ENCODE measurements at regions of chr1 and their contacts with region 1.

Region 1: DNA sequence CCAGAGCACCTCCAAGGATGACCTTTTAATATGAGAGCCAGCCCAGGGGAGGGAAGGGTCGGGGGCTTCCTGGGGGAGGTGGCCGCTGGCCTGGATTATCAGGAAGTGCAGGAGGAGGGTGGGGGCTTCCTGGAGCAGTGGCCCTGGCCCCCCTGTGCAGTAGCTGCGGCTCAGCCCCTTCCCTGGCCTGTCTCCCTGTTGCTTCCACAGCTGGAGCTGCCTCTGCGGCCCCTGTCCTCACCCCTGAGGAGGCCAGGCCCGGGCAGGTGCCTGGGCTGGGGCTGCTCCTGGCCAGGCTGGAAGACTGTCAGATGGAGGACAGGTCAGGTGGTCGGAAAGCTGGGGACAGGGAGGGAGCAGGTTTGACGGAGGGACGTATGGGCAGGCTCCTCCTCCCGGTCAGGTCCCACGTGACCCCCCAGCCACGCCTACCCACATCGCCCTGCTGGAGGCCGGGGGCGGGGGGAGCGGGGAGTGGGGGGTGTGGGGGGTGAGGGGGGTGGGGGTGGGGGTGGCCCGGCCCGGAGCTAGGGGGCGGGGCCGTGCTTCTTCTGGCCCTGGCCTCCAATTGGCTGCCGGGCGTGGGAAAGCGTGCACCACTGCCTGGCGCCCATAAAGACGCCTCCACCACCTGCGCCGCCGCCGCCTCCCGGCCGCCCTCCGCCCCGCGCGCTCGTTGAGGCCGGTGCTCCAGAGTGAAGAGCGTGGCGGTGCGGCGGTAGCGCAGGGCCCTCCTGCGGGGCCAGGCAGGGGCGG is 10.2 kb upstream of the TNFRSF14 start:
- DNase-seq: peak; percentile 57
- H3K4me3 ChIP-seq: peak overlapping the region in 2 of 3 experiments; percentile 43 to 44
- H3K27ac ChIP-seq: no peak overlapping the region
- H3K4me1 ChIP-seq: peaks cover 31% of the 10 kb centered on the region
- H3K27me3 ChIP-seq: no peaks in the 10 kb centered on the region
- CTCF ChIP-seq: no peak

Region 2: GRCh38 chr1:2429780-2430591 is 116.0 kb before region 1 on chr1:
- CTCF ChIA-PET with region 1: no interaction called
- dilution Hi-C with region 1: no loop called
- in situ Hi-C with region 1: loop called in 1 of 2 experiments (anchors 10 kb)
- intact Hi-C with region 1: no loop called
- DNase-seq: no peak
- H3K4me3 ChIP-seq: peak overlapping the region; percentile 70 to 83 (median 75)
- H3K27ac ChIP-seq: peak overlapping the region; percentile 74
- H3K4me1 ChIP-seq: peaks cover 54% of the 10 kb centered on the region
- H3K27me3 ChIP-seq: no peaks in the 10 kb centered on the region
- CTCF ChIP-seq: peak; percentile 63 to 79

Region 3: DNA sequence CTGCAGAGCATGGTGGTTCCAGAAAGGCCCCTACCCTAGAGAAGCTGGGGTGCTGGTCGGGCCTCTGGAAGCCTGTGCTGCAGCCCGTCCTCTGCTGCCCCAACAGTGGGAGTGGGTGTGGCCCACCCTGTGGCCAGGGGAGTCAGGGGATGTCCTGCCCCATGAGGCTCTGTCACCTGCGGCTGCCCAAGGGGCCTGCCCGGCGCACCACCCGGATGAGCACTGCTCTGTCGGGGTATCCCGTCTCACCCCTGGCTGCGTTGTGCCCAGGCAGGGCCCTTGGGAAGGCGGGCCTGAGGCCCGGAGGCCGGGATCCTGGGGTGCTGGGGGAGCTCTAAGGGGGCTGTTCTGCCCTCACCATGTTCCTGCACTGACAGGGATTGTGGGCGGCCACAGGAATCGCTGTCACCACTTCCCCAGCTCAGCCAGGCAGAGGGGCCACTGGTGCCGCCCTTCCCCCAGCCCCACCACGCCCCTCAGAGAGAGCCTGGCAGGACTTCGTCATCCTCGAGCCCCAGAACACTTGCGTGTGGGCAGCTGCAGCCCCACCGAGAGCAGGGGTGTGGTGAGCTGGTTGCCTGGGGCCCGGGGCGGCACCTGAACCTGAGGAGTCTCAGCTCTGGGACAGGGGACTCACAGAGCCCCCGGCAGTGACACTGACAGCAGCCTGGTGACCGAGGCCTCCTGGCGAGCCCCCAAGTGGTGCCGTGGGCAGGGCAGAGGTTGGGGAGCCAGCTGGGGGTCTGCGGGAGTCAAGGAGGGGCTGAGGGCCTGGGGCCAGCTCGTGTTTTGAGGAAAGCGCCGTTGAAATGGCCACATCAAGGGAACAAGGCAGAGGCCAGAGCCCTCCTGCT is 39.7 kb before region 1 on chr1:
- CTCF ChIA-PET with region 1: no interaction called
- dilution Hi-C with region 1: no loop called
- in situ Hi-C with region 1: no loop called
- intact Hi-C with region 1: loop called (anchors 1 kb)
- DNase-seq: no peak
- H3K4me3 ChIP-seq: no peak overlapping the region
- H3K27ac ChIP-seq: no peak overlapping the region
- H3K4me1 ChIP-seq: no peaks in the 10 kb centered on the region
- H3K27me3 ChIP-seq: no peaks in the 10 kb centered on the region
- CTCF ChIP-seq: no peak

Region 4: DNA sequence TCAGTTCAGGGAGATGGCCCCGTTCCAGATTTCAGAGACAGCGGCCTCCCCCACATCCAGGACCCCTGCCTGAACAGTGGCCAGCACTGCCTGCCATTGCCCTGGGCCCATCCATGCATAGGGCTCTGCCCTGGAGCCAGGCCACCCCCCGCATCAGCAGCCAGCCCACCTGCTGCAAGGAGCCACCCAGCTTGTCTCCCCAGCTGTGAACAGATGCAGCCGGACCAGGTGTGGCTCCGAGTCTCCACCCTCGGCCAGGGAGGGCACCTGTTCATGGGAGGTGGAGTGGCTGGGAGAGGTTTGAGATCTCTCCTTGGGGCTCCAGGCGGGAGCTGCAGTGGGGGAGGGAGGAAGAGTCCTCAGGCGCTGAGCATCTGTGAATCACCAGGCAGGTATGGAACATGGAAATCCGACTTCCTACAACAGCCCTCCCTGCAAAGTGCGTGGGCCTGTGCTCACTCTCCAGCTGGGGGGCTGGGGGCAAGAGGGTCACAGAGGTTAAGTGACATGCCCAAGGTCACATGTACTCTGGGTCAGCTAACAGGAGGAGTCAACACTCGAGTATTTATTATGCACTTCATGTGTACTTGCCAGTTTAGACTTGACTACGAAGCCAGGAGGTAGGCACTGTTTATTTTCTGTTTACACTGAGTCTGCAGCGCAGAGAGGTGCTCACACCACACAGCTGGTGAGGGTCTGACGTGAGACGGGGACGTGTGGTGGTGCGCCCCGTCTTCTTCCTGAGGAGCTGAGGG is 11.1 kb before region 1 on chr1:
- CTCF ChIA-PET with region 1: no interaction called
- dilution Hi-C with region 1: no loop called
- in situ Hi-C with region 1: no loop called
- intact Hi-C with region 1: loop called (anchors 1 kb)
- DNase-seq: peak; percentile 89
- H3K4me3 ChIP-seq: no peak overlapping the region
- H3K27ac ChIP-seq: no peak overlapping the region
- H3K4me1 ChIP-seq: peaks cover 60% of the 10 kb centered on the region
- H3K27me3 ChIP-seq: peaks cover 4% of the 10 kb centered on the region
- CTCF ChIP-seq: no peak

Measured in mammary epithelial cell (primary cell).